ENCODE measurements at regions of chr2 and their contacts with region 1.

Region 1: GRCh38 chr2:27409321-27410073 is at the start of gene PPM1G:
- DNase-seq: peak; percentile 92 to 98 (median 95)
- ATAC-seq: peak; percentile 99
- H3K4me3 ChIP-seq: peak within 1 kb of the TSS; percentile 92
- H3K4me3 Mint-ChIP-seq: peak within 1 kb of the TSS; percentile 87 to 96 (median 92)
- H3K27ac ChIP-seq: peak within 1 kb of the TSS; percentile 89
- H3K27ac Mint-ChIP-seq: peak within 1 kb of the TSS; percentile 89 to 98 (median 95)
- H3K4me1 ChIP-seq: peaks cover 13 to 17% of the 10 kb centered on the region in 2 donors
- H3K4me1 Mint-ChIP-seq: peaks cover 28 to 50% (median 35%) of the 10 kb centered on the region in 7 donors
- H3K27me3 ChIP-seq: no peaks in the 10 kb centered on the region
- H3K27me3 Mint-ChIP-seq: peaks cover 0 to 7% (median 0%) of the 10 kb centered on the region in 5 donors
- total RNA-seq, gene PPM1G: 39.5 to 101 (median 45.1) TPM

Region 2: DNA sequence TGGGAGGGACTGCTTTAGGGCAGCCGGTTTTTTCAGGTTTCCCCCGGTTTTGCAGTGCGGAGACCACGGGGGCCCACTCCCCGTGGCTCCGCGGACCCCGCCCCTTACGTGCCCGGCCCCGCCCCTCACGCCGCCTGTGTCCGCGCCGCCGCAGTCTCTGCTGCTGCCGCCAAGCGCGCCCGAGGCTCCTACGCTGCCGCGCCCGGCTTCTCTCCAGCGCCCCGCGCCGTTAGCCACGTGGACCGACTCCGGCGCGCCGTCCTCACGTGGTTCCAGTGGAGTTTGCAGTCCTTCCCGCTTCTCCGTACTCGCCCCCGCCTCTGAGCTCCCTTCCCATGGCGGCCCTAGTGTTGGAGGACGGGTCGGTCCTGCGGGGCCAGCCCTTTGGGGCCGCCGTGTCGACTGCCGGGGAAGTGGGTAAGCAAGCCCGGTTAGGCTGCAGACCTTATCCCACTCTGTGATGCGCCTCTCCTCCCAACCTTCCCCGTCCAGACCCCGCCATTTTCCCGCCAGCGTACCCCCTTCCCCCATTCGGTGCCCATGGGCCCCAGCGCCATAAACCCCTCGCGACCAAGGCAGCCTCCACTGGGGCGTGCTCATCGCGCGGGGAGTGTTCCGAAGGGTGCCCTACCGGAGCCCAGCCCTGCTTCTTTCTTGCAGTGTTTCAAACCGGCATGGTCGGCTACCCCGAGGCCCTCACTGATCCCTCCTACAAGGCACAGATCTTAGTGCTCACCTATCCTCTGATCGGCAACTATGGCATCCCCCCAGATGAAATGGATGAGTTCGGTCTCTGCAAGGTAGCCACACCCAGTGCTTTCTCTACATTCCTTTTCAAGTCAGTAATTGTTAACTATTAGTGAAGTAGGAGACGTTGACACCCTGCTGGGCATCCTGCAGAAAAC is 192.0 kb before region 1 on chr2 and contains the start of gene CAD:
- CTCF ChIA-PET with region 1: no interaction called
- POLR2A ChIA-PET with region 1: no interaction called
- intact Hi-C with region 1: loop called (anchors 1 to 10 kb)
- DNase-seq: peak; percentile 71 to 90 (median 80)
- ATAC-seq: peak; percentile 87
- H3K4me3 ChIP-seq: peak within 1 kb of the TSS; percentile 68
- H3K4me3 Mint-ChIP-seq: peak within 1 kb of the TSS; percentile 90 to 98 (median 96)
- H3K27ac ChIP-seq: peak within 1 kb of the TSS; percentile 85
- H3K27ac Mint-ChIP-seq: peak within 1 kb of the TSS; percentile 86 to 96 (median 94)
- H3K4me1 ChIP-seq: peaks cover 19 to 24% of the 10 kb centered on the region in 2 donors
- H3K4me1 Mint-ChIP-seq: peaks cover 26 to 52% (median 45%) of the 10 kb centered on the region in 7 donors
- H3K27me3 ChIP-seq: no peaks in the 10 kb centered on the region
- H3K27me3 Mint-ChIP-seq: no peaks in the 10 kb centered on the region
- total RNA-seq, gene CAD: 34.4 to 65.7 (median 45.4) TPM

Region 3: GRCh38 chr2:27356382-27357181 is 52.9 kb before region 1 on chr2 and contains the start of gene GTF3C2:
- CTCF ChIA-PET with region 1: no interaction called
- POLR2A ChIA-PET with region 1: no interaction called
- intact Hi-C with region 1: loop called (anchors 1 to 5 kb)
- DNase-seq: peak; percentile 76 to 94 (median 92)
- ATAC-seq: peak; percentile 85
- H3K4me3 ChIP-seq: peak within 1 kb of the TSS; percentile 96
- H3K4me3 Mint-ChIP-seq: peak within 1 kb of the TSS; percentile 95 to 100 (median 98)
- H3K27ac ChIP-seq: peak within 1 kb of the TSS; percentile 91
- H3K27ac Mint-ChIP-seq: peak within 1 kb of the TSS; percentile 96 to 100 (median 99)
- H3K4me1 ChIP-seq: peaks cover 24 to 34% of the 10 kb centered on the region in 2 donors
- H3K4me1 Mint-ChIP-seq: peaks cover 38 to 63% (median 56%) of the 10 kb centered on the region in 7 donors
- H3K27me3 ChIP-seq: no peaks in the 10 kb centered on the region
- H3K27me3 Mint-ChIP-seq: no peaks in the 10 kb centered on the region
- total RNA-seq, gene GTF3C2: 68.0 to 106 (median 78.3) TPM

Region 4: DNA sequence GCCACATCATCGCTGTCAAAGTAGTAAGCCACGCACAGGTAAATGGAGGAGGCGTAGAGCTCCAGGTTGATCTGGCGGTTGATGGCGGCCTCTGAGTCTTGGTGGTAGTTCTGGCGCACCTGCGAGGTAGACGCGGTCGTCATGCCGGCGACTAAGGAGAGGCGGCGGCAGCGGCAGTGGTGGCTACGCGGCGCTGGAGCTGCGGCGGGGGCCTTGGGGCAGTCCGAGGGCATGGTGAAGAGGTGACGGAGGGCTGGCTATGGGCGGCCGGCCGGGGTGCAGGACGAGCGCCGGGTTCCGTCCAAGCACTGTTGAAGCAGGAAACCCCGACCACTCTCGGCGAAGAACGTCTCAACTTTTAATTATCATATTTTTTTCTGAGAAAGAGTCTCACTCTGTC is 16.3 kb before region 1 on chr2:
- CTCF ChIA-PET with region 1: no interaction called
- POLR2A ChIA-PET with region 1: interaction called, 8 read pairs
- intact Hi-C with region 1: loop called in 1 of 2 experiments (anchors 2 kb)
- DNase-seq: no peak
- ATAC-seq: no peak
- H3K4me3 ChIP-seq: no peak overlapping the region
- H3K4me3 Mint-ChIP-seq: peak overlapping the region in 2 of 10 donors; percentile 20 to 33
- H3K27ac ChIP-seq: no peak overlapping the region
- H3K27ac Mint-ChIP-seq: peak overlapping the region in 6 of 9 donors; percentile 21 to 67 (median 54)
- H3K4me1 ChIP-seq: peaks cover 10 to 16% of the 10 kb centered on the region in 2 donors
- H3K4me1 Mint-ChIP-seq: peaks cover 32 to 52% (median 35%) of the 10 kb centered on the region in 7 donors
- H3K27me3 ChIP-seq: no peaks in the 10 kb centered on the region
- H3K27me3 Mint-ChIP-seq: no peaks in the 10 kb centered on the region

Region 5: DNA sequence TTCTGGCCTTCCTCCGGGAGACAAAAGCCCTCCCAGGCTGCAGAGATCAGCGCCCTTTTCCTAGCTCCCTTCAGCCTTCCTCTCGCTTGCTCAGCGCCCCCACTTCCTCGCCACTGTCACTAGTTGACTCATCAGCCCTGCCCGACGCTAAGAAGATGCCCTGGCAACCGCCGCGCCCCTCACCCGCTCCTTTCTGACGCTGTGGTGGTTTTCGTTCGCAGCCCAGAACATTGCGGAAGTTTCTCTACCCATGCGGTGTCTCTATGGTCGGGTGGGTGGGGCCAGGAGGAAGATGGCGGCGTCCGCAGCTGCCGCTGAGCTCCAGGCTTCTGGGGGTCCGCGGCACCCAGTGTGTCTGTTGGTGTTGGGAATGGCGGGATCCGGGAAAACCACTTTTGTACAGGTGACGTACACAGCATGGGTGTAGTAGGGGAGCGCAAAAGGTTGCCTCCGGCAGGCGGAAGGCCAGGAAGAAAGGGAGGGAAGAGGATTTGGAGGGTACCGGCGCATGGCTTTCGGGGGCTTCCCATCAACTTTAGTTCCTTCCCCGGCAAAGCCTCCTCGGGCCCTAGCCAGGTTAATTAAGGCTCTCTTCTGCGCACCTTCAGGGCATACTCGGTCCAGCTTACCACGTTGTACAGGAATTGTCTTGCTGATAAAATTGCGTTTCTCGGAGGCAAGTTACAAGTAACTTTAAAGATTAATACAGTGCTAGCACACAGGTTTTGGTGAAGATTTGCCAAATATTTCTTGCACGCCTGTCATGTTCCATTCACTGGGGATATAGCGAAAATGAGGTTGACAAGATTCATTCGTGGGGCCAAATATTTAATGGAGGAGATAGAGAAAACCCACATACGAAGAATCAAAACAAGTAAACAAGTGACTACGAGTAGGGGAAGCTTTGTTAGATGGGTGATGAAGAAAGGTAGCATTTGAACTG is 219.5 kb after region 1 on chr2 and contains the starts of genes CCDC121 and GPN1:
- CTCF ChIA-PET with region 1: no interaction called
- POLR2A ChIA-PET with region 1: interaction called, 7 read pairs
- intact Hi-C with region 1: loop called (anchors 1 kb)
- DNase-seq: peak; percentile 79 to 96 (median 93)
- ATAC-seq: peak; percentile 99
- H3K4me3 ChIP-seq: peak within 1 kb of the TSS; percentile 92
- H3K4me3 Mint-ChIP-seq: no peak within 1 kb of the TSS
- H3K27ac ChIP-seq: peak within 1 kb of the TSS; percentile 92
- H3K27ac Mint-ChIP-seq: peak within 1 kb of the TSS in 5 of 9 donors; percentile 16 to 72 (median 59)
- H3K4me1 ChIP-seq: peaks cover 11 to 13% of the 10 kb centered on the region in 2 donors
- H3K4me1 Mint-ChIP-seq: peaks cover 1 to 33% (median 22%) of the 10 kb centered on the region in 7 donors
- H3K27me3 ChIP-seq: no peaks in the 10 kb centered on the region
- H3K27me3 Mint-ChIP-seq: no peaks in the 10 kb centered on the region
- total RNA-seq, gene CCDC121: 0.61 to 2.7 (median 1.9) TPM
- total RNA-seq, gene GPN1: 27.8 to 45.5 (median 28.9) TPM

Region 6: GRCh38 chr2:27683390-27684071 is 274.0 kb after region 1 on chr2:
- CTCF ChIA-PET with region 1: no interaction called
- POLR2A ChIA-PET with region 1: interaction called, 3 read pairs
- intact Hi-C with region 1: loop called in 1 of 2 experiments (anchors 2 kb)
- DNase-seq: peak; percentile 54 to 90 (median 82)
- ATAC-seq: peak; percentile 98
- H3K4me3 ChIP-seq: no peak overlapping the region
- H3K4me3 Mint-ChIP-seq: peak overlapping the region in 1 of 10 donors; percentile 35
- H3K27ac ChIP-seq: no peak overlapping the region
- H3K27ac Mint-ChIP-seq: peak overlapping the region; percentile 35 to 78 (median 66)
- H3K4me1 ChIP-seq: peaks cover 0 to 28% of the 10 kb centered on the region in 2 donors
- H3K4me1 Mint-ChIP-seq: peaks cover 5 to 25% (median 13%) of the 10 kb centered on the region in 7 donors
- H3K27me3 ChIP-seq: no peaks in the 10 kb centered on the region
- H3K27me3 Mint-ChIP-seq: no peaks in the 10 kb centered on the region